ENCODE measurements at regions of chr11 and their contacts with region 1.

Region 1: DNA sequence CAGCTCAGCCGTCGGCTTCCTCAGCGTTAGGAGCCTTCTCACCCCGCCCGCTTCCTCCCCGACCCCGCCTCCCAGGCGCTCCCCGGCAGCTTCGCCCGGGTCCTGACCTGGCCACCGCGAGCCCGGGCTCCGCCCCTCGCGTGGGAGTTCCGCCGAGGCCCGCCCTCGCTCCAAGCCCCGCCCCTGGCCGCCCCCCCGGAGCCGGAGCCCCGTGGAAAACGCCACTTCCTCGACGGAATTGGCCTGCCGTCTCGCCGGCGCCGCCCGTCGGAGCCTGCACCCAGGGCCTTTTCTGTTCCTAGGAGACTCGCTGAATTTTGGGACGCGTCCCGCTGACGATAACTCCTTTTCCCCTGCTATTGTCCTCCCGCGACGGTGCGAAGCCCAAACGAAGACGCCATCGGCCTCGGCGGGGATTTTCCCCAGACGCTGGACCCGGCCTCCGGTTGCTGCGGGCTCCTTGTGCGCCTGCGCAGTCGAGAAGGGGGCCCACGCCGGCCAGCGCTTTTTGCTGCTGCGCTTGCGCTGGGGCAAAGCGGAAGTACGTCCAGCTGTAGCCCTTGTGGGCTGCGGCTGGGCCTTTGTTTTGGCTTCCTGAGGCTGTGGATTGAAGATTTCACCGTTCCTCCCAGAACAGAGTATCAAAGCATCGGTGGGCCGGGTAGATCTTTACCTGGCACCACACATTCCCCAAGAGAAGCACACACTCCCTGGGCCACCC is 10.0 kb downstream of the RELA start:
- DNase-seq: peak; percentile 92 to 99 (median 96)
- ATAC-seq: peak; percentile 77 to 81
- H3K4me3 Mint-ChIP-seq: peak overlapping the region; percentile 73 to 95 (median 91)
- H3K27ac Mint-ChIP-seq: peak overlapping the region; percentile 96 to 99 (median 98)
- H3K4me1 Mint-ChIP-seq: peaks cover 38 to 66% (median 52%) of the 10 kb centered on the region in 4 donors
- H3K27me3 Mint-ChIP-seq: peaks cover 0 to 2% (median 0%) of the 10 kb centered on the region in 5 donors

Region 2: GRCh38 chr11:65489706-65490110 is 163.0 kb before region 1 on chr11:
- POLR2A ChIA-PET with region 1: no interaction called
- DNase-seq: no peak
- ATAC-seq: no peak
- H3K4me3 Mint-ChIP-seq: no peak overlapping the region
- H3K27ac Mint-ChIP-seq: peak overlapping the region in 1 of 10 donors; percentile 63
- H3K4me1 Mint-ChIP-seq: peaks cover 12 to 47% (median 37%) of the 10 kb centered on the region in 4 donors
- H3K27me3 Mint-ChIP-seq: no peaks in the 10 kb centered on the region

Region 3: DNA sequence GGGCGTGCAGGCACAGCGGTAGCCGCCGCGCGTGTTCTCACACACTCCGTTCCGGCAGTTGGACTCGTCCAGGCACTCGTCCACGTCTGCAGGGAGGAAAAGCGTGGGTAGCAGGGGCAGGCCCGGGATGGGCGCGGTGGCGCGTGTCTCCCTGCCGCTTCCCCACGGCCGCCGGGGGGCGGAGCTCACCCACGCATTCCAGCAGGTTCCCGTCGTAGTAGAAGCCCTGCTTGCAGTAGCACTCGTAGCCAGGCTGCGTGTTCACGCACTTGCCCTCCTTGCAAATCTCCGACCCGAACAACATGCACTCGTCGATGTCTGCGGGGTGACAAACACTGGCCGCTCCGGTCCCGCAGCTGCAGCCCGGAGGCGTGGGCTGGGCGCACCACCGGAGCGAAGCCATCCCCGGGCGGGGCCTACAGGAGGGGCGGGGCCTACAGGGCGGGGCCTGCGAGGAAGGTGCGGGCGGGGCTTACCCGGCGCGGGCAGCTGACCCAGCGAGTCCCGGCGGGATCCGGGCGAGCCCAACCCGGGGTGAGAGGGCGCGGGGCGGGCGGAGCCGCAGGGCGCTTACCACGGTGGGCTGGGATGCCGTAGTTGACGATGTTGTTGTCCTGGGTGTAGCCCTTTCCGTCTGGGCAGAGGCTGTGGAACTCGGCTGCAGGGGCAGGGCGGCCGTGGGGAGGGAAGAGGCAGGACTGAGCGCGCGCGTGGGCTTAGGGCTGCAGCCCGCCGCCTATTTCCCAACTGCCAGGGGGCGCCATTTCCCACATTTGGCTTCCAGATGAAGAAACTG is 112.2 kb before region 1 on chr11:
- POLR2A ChIA-PET with region 1: no interaction called
- DNase-seq: peak; percentile 79 to 99 (median 86)
- ATAC-seq: peak; percentile 77 to 84
- H3K4me3 Mint-ChIP-seq: peak overlapping the region; percentile 77 to 90 (median 85)
- H3K27ac Mint-ChIP-seq: peak overlapping the region; percentile 80 to 96 (median 86)
- H3K4me1 Mint-ChIP-seq: peaks cover 15 to 41% (median 31%) of the 10 kb centered on the region in 4 donors
- H3K27me3 Mint-ChIP-seq: no peaks in the 10 kb centered on the region

Region 4: GRCh38 chr11:65575568-65576231 is 77.0 kb before region 1 on chr11 and contains the start of gene EHBP1L1:
- POLR2A ChIA-PET with region 1: interaction called, 13 read pairs
- DNase-seq: peak; percentile 65 to 90 (median 78)
- ATAC-seq: peak; percentile 41 to 45
- H3K4me3 Mint-ChIP-seq: peak within 1 kb of the TSS; percentile 89 to 99 (median 93)
- H3K27ac Mint-ChIP-seq: peak within 1 kb of the TSS; percentile 89 to 99 (median 97)
- H3K4me1 Mint-ChIP-seq: peaks cover 30 to 73% (median 60%) of the 10 kb centered on the region in 4 donors
- H3K27me3 Mint-ChIP-seq: no peaks in the 10 kb centered on the region
- polyA plus RNA-seq, gene EHBP1L1: 10.8 to 19.8 (median 11.5) TPM

Region 5: DNA sequence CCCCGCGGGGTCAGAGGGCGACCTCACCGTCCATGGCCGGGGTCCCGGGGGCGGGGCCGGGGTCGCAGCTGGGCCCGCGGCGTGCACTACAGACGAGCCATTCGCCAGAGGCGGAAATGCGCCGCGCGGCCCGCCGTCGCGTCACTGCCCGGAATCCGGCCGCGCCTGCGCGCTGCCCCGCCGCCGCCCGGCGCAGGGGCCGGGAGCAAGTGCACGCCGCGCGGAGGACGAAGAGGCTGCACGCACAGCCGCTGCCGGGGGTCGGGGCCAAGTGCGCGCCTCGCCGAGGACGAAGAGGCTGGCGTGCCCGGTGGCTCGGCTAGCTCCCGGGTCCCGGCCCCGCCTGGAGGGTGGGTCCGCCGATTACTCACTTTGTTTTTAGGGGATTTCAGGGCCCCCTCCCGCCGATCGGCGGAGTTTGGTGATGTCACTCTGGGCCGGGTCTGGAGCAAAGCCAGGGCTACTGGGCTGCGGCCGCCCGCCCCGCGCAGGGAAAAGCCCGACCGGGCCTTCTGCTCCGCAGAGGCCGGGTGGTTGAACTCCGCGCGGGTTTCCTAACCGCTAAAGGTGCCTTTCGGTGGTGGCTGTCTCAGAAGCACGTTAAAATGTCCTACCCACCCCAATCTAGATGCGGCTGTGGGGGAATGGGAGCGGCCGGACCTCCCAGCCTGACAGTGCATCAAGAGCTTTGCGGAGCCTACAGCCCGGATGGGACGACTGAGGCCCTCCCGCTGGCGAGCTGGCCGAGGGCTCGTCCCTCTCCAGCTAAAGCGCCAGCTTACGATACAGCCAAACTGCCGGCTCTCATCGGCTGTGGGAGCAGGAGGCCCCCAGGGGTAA is 10.3 kb after region 1 on chr11 and contains the start of gene RELA:
- POLR2A ChIA-PET with region 1: interaction called, 130 read pairs
- DNase-seq: peak; percentile 85 to 95 (median 88)
- ATAC-seq: peak; percentile 80 to 84
- H3K4me3 Mint-ChIP-seq: peak within 1 kb of the TSS; percentile 86 to 93 (median 88)
- H3K27ac Mint-ChIP-seq: peak within 1 kb of the TSS; percentile 91 to 98 (median 95)
- H3K4me1 Mint-ChIP-seq: peaks cover 16 to 47% (median 36%) of the 10 kb centered on the region in 4 donors
- H3K27me3 Mint-ChIP-seq: no peaks in the 10 kb centered on the region
- polyA plus RNA-seq, gene RELA: 38.4 to 69.8 (median 56.6) TPM

Measured in naive thymus-derived CD8-positive, alpha-beta T cell (primary cell).